HepG2 (cell line): ENCODE measurements at regions of chr11 and their contacts with region 1.

Region 1: DNA sequence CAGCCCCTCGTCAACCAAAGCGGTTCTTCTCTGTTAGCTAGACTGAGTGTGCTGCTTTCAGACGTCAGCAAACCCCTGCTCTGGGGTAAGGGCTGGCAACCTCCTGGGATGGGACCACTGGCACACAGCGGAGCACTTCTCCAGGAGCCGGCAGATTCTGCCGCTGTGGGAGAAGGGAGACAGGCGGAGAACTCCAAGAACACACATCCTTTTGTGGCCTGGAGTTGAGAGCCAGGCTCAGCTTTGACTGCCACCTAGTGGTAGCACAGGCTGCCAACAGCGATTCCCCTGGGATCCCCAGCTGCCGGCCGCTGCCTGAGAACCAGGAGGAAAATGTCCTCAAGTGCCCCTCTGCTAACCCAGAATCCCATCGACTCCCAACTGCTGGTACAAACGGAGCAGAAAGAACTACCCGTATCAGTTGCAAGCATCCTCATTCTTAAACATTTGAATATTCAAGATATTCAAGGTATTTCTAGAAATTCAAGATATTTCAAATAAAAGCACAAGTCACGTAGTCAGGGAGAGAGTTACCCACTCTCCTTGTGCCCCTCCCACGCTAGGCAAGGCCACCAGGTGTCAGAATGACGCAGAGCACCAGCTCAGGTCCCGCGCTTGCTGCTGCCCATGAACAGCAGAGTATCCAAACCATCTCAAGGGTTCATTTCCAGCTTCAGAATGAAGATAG is 4.9 kb downstream of the LTO1 start:
- DNase-seq: peak; percentile 77
- ATAC-seq: peak; percentile 52
- H3K4me3 ChIP-seq: 0 out of 6 replicates have a peak overlapping the region, but pooled peaks of 2 of the 3 experiments have one; percentile 13 to 18
- H3K27ac ChIP-seq: peak overlapping the region; percentile 39
- H3K4me1 ChIP-seq: peaks cover 58% of the 10 kb centered on the region
- H3K27me3 ChIP-seq: no peaks in the 10 kb centered on the region
- CTCF ChIP-seq: peak; percentile 96
- EP300 ChIP-seq: no peak
- POLR2A ChIP-seq: no peak
- RAD21 ChIP-seq: peak; percentile 95

Region 2: DNA sequence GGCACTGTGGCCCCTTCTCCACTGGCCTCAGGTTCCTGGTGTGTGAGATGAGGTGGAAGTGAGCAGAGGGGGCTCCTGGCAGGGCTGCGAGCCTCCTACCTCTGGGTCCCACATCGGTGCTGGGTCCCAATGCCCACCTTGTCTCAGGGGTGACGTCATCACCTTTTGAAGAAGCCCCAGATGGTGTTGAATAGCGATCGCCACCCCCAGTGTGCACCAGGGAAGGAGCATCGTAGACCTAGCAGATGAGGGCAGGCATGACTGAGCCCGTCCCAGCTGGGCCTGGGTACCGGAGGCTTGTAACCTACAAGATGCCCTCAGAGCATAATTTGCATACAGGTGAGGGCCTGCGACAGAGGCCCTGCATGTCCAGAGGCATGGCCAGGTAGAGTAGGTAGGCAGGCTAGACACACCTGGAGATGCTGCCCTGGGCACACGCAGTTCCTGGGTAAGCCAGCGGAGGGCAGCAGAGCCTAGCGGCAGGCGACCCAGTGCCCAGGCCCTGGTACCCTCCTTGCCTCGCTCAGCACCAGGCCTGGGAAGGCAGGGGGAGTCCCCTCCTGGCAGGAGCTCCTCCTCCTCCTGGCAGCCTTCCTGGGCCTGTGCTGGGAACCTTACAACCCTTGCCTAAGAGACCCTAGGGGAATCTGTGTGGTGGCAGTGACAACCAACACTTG is 569.0 kb before region 1 on chr11:
- CTCF ChIA-PET with region 1: interaction called, 14 read pairs
- POLR2A ChIA-PET with region 1: interaction called, 3 read pairs
- in situ Hi-C with region 1: loop called (anchors 10 kb)
- intact Hi-C with region 1: loop called (anchors 1 kb)
- DNase-seq: peak; percentile 37
- ATAC-seq: peak; percentile 85
- H3K4me3 ChIP-seq: no peak overlapping the region
- H3K27ac ChIP-seq: no peak overlapping the region
- H3K4me1 ChIP-seq: no peaks in the 10 kb centered on the region
- H3K27me3 ChIP-seq: peaks cover 0 to 26% of the 10 kb centered on the region in 2 experiments; a peak in 3 of 5 replicates
- CTCF ChIP-seq: peak; percentile 98
- EP300 ChIP-seq: no peak
- POLR2A ChIP-seq: no peak
- RAD21 ChIP-seq: peak; percentile 98

Region 3: DNA sequence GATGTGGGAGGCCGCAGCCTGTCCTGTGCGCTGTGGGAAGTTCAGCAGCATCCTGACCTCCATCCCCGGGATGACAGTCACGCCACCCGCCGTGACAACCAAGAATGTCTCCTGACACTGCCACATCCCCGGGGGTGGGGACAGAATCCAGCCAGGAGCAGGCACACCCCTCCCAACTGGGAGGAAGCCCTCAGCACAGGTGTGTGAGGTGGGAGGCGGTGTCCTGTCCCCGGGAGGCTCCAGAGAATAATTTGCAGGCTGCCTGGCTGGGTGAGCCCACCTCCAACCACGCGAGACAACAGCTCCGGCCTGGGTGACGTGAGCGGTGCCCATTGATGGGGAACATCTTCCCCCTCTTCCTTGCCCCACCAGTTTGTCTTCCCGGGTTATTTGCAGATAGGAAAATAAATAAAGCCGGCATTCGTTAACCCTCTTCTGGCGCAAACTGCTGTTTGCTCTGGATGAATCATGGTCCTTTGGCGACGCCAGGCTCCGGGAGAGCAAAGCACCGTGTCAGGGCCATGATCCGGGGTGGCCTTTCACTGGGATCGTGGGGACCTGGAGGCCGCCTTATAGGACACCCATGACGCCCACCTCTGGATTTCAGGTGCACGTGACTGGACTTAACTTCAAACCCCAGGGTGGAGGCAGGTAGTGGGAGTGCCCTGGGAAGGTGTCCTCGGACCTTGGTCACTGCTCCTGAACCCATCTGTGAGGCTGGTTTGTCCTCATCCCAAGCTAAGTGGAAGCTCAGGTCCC is 15.6 kb before region 1 on chr11:
- CTCF ChIA-PET with region 1: no interaction called
- POLR2A ChIA-PET with region 1: interaction called, 128 read pairs
- in situ Hi-C with region 1: no loop called
- intact Hi-C with region 1: loop called (anchors 1 kb)
- DNase-seq: peak; percentile 94
- ATAC-seq: peak; percentile 58
- H3K4me3 ChIP-seq: peak overlapping the region in 1 of 3 experiments; percentile 48; a peak in 2 of 6 replicates
- H3K27ac ChIP-seq: peak overlapping the region; percentile 88
- H3K4me1 ChIP-seq: peaks cover 69% of the 10 kb centered on the region
- H3K27me3 ChIP-seq: no peaks in the 10 kb centered on the region
- CTCF ChIP-seq: peak; percentile 57
- EP300 ChIP-seq: peak; percentile 71 to 88; a peak in 3 of 4 replicates
- POLR2A ChIP-seq: peak; percentile 57 to 62
- RAD21 ChIP-seq: 0 out of 2 replicates have a peak, but pooled peaks have one; percentile 7

Region 4: GRCh38 chr11:69841859-69842698 is 171.8 kb after region 1 on chr11:
- CTCF ChIA-PET with region 1: no interaction called
- POLR2A ChIA-PET with region 1: no interaction called
- in situ Hi-C with region 1: no loop called
- intact Hi-C with region 1: no loop called
- DNase-seq: no peak
- ATAC-seq: no peak; the same call in 2 of the 3 replicates
- H3K4me3 ChIP-seq: no peak overlapping the region
- H3K27ac ChIP-seq: no peak overlapping the region
- H3K4me1 ChIP-seq: no peaks in the 10 kb centered on the region
- H3K27me3 ChIP-seq: peaks cover 0 to 5% of the 10 kb centered on the region in 2 experiments; a peak in 2 of 5 replicates
- CTCF ChIP-seq: peak; percentile 60
- EP300 ChIP-seq: no peak
- POLR2A ChIP-seq: no peak
- RAD21 ChIP-seq: peak; percentile 32; the same call in 1 of the 2 replicates